Mammary epithelial cell (primary cell): ENCODE measurements at regions of chr17 and their contacts with region 1.

Region 1: GRCh38 chr17:79839363-79840268 is at the start of gene CBX4:
- DNase-seq: peak; percentile 92
- H3K4me3 ChIP-seq: peak within 1 kb of the TSS; percentile 71 to 86 (median 85)
- H3K27ac ChIP-seq: peak within 1 kb of the TSS; percentile 68
- H3K4me1 ChIP-seq: peaks cover 47% of the 10 kb centered on the region
- H3K27me3 ChIP-seq: peaks cover 35% of the 10 kb centered on the region
- CTCF ChIP-seq: peak; percentile 63 to 84
- total RNA-seq, gene CBX4: 28.5 to 34.7 TPM

Region 2: DNA sequence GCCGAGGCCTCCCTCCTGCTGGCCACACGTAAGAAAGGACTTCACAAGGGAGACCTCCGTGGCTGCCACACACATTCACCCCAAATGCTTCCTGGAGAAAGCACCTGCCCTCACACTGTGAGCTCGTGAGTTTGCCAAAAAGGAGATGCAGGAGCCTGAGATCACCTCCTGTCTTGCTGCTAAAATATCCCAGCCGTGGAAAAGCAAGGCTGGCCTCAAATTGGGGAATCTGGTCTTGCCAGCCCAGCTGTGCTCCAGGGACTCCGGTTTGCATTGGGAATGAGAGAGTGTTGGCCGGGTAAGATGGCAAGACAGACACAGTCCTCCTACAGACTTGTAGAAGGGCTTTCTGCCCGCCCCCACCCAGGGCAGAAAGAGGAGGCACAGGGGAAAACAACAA is 242.6 kb before region 1 on chr17:
- CTCF ChIA-PET with region 1: interaction called, 14 read pairs
- dilution Hi-C with region 1: no loop called
- in situ Hi-C with region 1: no loop called
- intact Hi-C with region 1: no loop called
- DNase-seq: no peak
- H3K4me3 ChIP-seq: no peak overlapping the region
- H3K27ac ChIP-seq: no peak overlapping the region
- H3K4me1 ChIP-seq: no peaks in the 10 kb centered on the region
- H3K27me3 ChIP-seq: peaks cover 2% of the 10 kb centered on the region
- CTCF ChIP-seq: no peak

Region 3: DNA sequence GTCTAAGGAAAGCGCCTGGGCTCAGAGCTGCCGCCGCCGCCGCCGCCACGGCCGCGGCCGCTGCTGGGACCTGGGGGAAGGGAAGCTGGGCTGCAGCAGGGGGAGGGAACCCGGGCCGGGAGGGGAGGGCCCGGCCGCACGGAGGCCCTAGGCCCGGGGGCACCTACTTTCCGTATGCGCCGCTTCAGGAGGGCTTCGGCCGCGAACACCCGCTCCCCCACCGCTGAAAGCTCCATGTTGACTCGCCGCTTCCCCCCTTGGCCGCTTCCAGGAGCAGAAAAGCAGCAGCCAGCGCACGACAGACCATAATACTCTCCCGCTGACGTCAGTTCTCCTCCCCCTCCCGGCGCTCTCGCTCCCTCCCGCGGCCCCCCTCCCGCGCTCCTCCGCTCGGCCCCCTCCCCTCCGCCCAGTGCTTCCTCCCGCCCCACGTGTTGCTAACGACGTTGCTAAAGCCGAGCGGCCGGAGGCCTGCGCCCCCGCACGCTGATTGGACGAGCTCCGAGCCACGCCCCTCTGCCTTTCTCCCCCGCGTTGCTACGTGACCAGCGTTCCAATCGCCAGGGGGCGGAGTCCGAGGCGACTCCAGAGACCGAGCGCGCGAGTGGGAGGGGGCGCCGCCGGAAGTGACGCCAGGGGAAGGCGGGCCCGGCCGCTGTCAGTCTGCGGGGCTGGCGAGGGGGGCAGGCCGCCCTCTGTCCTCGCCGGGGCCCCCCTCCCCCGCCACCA is 42.7 kb before region 1 on chr17 and contains the start of gene CBX8:
- CTCF ChIA-PET with region 1: interaction called, 7 read pairs
- dilution Hi-C with region 1: no loop called
- in situ Hi-C with region 1: no loop called
- intact Hi-C with region 1: loop called (anchors 5 kb)
- DNase-seq: peak; percentile 99
- H3K4me3 ChIP-seq: peak within 1 kb of the TSS; percentile 67 to 75 (median 73)
- H3K27ac ChIP-seq: peak within 1 kb of the TSS; percentile 87
- H3K4me1 ChIP-seq: peaks cover 39% of the 10 kb centered on the region
- H3K27me3 ChIP-seq: peaks cover 31% of the 10 kb centered on the region
- CTCF ChIP-seq: peak in 1 of 2 donors; percentile 18
- total RNA-seq, gene CBX8: 4.5 to 5.4 TPM

Region 4: DNA sequence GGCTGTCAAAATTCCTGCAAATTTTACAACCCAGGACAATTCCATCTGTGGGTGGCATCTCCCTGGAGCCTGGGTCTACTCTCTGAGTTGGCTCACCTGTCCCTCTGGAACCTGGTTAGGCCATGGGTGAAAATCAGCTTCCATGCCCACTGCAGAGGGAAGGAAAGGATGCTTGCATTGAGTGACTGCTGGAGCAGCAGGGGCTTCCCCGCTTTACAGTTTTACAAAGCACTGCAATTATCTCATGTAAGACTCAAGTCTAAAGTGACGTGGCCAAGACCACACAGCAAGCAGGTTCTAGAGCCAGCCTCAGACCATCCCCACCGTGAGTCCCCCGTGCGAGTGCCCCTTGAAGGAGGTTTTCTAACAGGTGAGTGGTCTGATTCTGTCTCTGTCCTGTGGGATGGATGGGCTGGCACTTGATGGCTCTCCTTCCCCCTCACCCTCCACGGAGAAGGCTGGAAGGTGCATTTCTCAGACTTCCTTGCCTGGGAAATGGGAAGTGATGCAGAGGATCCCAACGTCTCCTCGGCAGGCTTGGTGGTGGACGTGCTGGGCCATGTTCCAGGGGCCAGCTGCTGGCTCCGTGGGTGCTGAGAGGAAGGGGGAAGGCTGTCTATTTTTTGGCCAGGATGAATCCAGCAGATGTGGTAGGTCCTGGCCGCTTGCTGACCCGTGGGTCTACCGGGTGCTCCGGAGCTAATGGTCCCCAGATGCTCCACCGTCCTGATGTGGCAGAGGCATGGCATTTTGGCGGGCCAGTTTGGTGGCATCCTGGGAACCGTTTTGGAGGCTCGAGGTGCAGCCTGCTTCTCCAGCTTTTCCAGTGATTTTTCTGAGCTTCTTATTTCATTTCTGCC is 26.0 kb after region 1 on chr17:
- CTCF ChIA-PET with region 1: interaction called, 14 read pairs
- dilution Hi-C with region 1: no loop called
- in situ Hi-C with region 1: no loop called
- intact Hi-C with region 1: no loop called
- DNase-seq: no peak
- H3K4me3 ChIP-seq: no peak overlapping the region
- H3K27ac ChIP-seq: no peak overlapping the region
- H3K4me1 ChIP-seq: no peaks in the 10 kb centered on the region
- H3K27me3 ChIP-seq: no peaks in the 10 kb centered on the region
- CTCF ChIP-seq: no peak

Region 5: DNA sequence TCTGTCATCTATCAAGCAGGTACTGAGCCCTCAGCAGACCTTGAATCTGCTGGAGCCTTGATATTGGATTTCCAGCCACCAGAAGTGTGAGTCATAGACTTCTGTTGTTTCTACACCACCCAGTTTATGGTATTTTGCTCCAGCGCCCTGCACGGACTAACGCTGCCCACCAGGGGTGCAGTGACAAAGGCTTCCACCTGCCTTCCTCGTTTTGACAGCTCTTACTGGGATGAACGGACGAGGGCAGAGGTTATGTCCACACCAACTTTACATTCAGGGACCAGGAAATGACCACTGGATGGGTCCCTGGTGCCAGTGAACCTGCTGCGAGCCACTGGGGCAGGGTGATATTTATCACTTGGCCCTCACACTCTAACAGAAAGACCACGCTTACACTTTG is 66.2 kb after region 1 on chr17:
- CTCF ChIA-PET with region 1: no interaction called
- dilution Hi-C with region 1: no loop called
- in situ Hi-C with region 1: no loop called
- intact Hi-C with region 1: no loop called
- DNase-seq: no peak
- H3K4me3 ChIP-seq: no peak overlapping the region
- H3K27ac ChIP-seq: no peak overlapping the region
- H3K4me1 ChIP-seq: no peaks in the 10 kb centered on the region
- H3K27me3 ChIP-seq: peaks cover 2% of the 10 kb centered on the region
- CTCF ChIP-seq: no peak

Region 6: DNA sequence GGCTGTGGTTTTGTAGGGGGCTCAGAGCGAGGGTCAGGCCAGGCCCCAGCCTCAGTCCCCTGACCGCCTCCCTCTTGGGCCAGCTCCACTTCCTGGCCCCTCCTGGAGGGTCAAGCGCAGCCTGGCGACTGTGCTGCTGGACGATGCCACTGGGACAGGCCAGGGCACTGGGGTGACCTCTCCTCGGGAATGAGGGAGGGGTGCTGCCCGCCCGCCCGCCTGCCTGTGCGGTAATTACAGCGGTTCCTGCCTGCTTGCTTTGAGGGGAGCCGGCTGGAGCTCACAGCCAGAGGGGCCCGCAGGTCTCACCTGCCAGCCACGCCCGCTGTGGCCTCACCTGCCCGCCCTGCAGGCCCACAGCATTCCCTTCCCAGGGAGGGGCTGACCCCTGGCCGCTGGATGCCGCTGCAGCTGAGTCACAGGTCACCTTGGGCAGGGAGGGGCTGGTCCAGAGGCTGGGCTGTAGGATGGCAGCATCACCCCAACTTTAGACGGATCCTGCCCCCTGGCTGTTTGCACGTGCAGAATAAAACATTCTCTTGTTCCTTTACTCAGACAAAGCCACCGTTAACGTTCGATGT is 76.3 kb after region 1 on chr17:
- CTCF ChIA-PET with region 1: interaction called, 4 read pairs
- dilution Hi-C with region 1: no loop called
- in situ Hi-C with region 1: no loop called
- intact Hi-C with region 1: loop called (anchors 2 kb)
- DNase-seq: peak; percentile 37
- H3K4me3 ChIP-seq: no peak overlapping the region
- H3K27ac ChIP-seq: no peak overlapping the region
- H3K4me1 ChIP-seq: peaks cover 21% of the 10 kb centered on the region
- H3K27me3 ChIP-seq: no peaks in the 10 kb centered on the region
- CTCF ChIP-seq: peak in 1 of 2 donors; percentile 32

Region 7: GRCh38 chr17:79951361-79952264 is 112.0 kb after region 1 on chr17:
- CTCF ChIA-PET with region 1: no interaction called
- dilution Hi-C with region 1: no loop called
- in situ Hi-C with region 1: no loop called
- intact Hi-C with region 1: no loop called
- DNase-seq: no peak
- H3K4me3 ChIP-seq: no peak overlapping the region
- H3K27ac ChIP-seq: no peak overlapping the region
- H3K4me1 ChIP-seq: peaks cover 13% of the 10 kb centered on the region
- H3K27me3 ChIP-seq: no peaks in the 10 kb centered on the region
- CTCF ChIP-seq: no peak

Region 8: GRCh38 chr17:79991140-79991923 is 151.7 kb after region 1 on chr17:
- CTCF ChIA-PET with region 1: no interaction called
- dilution Hi-C with region 1: no loop called
- in situ Hi-C with region 1: no loop called
- intact Hi-C with region 1: loop called (anchors 2 kb)
- DNase-seq: peak; percentile 46
- H3K4me3 ChIP-seq: peak overlapping the region in 1 of 3 experiments; percentile 39
- H3K27ac ChIP-seq: no peak overlapping the region
- H3K4me1 ChIP-seq: peaks cover 13% of the 10 kb centered on the region
- H3K27me3 ChIP-seq: peaks cover 2% of the 10 kb centered on the region
- CTCF ChIP-seq: peak; percentile 41 to 73

Region 9: GRCh38 chr17:80248920-80249710 is 409.5 kb after region 1 on chr17:
- CTCF ChIA-PET with region 1: no interaction called
- dilution Hi-C with region 1: no loop called
- in situ Hi-C with region 1: no loop called
- intact Hi-C with region 1: no loop called
- DNase-seq: no peak
- H3K4me3 ChIP-seq: no peak overlapping the region
- H3K27ac ChIP-seq: no peak overlapping the region
- H3K4me1 ChIP-seq: peaks cover 3% of the 10 kb centered on the region
- H3K27me3 ChIP-seq: no peaks in the 10 kb centered on the region
- CTCF ChIP-seq: no peak